ENCODE measurements at regions of chr7 and their contacts with region 1.

Region 1: GRCh38 chr7:2863461-2864066 is 19.5 kb upstream of the GNA12 start:
- DNase-seq: peak; percentile 91
- H3K4me3 Mint-ChIP-seq: peak overlapping the region; percentile 73
- H3K27ac Mint-ChIP-seq: peak overlapping the region; percentile 91
- H3K4me1 Mint-ChIP-seq: peaks cover 25% of the 10 kb centered on the region
- H3K27me3 Mint-ChIP-seq: no peaks in the 10 kb centered on the region

Region 2: GRCh38 chr7:2720582-2721491 is 142.7 kb before region 1 on chr7:
- CTCF ChIA-PET with region 1: interaction called, 6 read pairs
- POLR2A ChIA-PET with region 1: no interaction called
- intact Hi-C with region 1: loop called (anchors 5 kb)
- DNase-seq: peak; percentile 95
- H3K4me3 Mint-ChIP-seq: peak overlapping the region; percentile 16
- H3K27ac Mint-ChIP-seq: peak overlapping the region; percentile 56
- H3K4me1 Mint-ChIP-seq: peaks cover 47% of the 10 kb centered on the region
- H3K27me3 Mint-ChIP-seq: no peaks in the 10 kb centered on the region

Region 3: DNA sequence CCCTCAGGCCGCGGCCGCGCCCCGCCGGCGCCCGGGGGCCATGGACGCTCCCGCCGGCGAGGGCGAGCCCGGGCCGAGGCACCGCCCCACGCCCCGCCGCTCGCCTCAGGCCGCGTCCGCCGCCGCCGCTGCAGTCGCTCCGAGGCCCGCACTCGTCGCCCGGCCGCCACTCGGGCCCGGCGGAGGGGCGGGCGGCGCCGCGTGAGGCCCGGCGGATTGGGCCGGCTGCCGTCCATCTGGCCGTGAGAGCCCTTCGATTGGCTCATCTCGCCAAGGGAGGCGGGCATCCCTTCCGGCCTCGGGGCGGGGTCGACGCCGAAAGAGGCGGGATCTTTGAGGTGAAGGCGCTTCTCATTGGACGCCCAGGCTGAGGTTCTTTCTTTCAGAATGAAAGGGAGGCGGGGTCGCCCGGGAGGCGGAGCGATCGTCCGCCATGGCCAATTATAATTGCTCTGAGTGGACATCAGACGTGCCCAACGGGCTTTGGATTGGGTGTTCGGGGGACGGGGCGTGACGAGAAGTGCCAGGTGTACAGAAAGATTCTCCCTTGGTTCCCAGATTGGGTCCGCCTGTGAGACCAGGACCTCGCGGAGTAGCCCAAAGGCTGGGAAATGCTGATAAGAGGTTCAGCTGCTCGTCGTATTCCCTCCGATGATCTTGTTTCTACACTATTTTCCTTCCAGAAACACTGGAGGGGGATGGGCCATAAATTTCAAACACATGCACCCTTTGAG is 19.2 kb before region 1 on chr7 and contains the start of gene GNA12:
- CTCF ChIA-PET with region 1: interaction called, 9 read pairs
- POLR2A ChIA-PET with region 1: no interaction called
- intact Hi-C with region 1: loop called (anchors 2 kb)
- DNase-seq: peak; percentile 99
- H3K4me3 Mint-ChIP-seq: peak within 1 kb of the TSS; percentile 74
- H3K27ac Mint-ChIP-seq: peak within 1 kb of the TSS; percentile 42
- H3K4me1 Mint-ChIP-seq: peaks cover 42% of the 10 kb centered on the region
- H3K27me3 Mint-ChIP-seq: no peaks in the 10 kb centered on the region
- total RNA-seq, gene GNA12: 23.6 to 23.7 TPM

Region 4: DNA sequence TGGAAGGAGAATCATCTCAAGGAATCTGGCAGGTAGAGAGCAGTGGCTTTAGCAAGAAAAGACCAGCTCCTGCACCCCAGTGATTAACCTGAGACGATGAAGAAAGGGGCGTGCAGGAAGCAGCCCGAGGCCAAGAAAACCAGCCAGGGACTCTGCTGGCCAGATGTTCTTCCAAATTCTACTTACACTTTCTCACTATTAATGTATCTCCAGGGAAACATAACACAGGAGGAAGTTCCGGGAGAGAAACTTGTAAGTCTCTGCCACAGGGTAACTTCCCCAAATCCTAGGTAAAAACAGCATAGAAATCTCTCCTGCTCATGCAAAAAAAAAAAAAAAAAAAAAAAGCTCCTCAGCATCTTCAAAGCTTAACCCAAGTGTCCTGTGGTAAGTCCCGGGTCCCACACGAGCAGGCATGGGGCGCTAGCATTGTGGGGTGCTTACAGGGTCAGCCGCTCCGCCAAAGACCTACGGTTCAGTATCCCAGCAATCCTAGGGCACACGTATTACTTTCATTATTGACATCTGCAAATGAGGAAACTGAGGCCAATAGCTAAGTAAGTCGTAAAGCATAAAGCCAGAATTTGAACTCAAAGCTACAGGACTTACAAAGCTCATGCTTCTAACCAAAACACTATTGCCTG is 77.8 kb after region 1 on chr7:
- CTCF ChIA-PET with region 1: no interaction called
- POLR2A ChIA-PET with region 1: no interaction called
- intact Hi-C with region 1: no loop called
- DNase-seq: peak; percentile 3
- H3K4me3 Mint-ChIP-seq: no peak overlapping the region
- H3K27ac Mint-ChIP-seq: no peak overlapping the region
- H3K4me1 Mint-ChIP-seq: peaks cover 4% of the 10 kb centered on the region
- H3K27me3 Mint-ChIP-seq: no peaks in the 10 kb centered on the region

Region 5: GRCh38 chr7:3154912-3155494 is 291.4 kb after region 1 on chr7:
- CTCF ChIA-PET with region 1: interaction called, 34 read pairs
- POLR2A ChIA-PET with region 1: no interaction called
- intact Hi-C with region 1: loop called (anchors 2 kb)
- DNase-seq: peak; percentile 70
- H3K4me3 Mint-ChIP-seq: no peak overlapping the region
- H3K27ac Mint-ChIP-seq: peak overlapping the region; percentile 19
- H3K4me1 Mint-ChIP-seq: peaks cover 19% of the 10 kb centered on the region
- H3K27me3 Mint-ChIP-seq: peaks cover 2% of the 10 kb centered on the region

Region 6: GRCh38 chr7:3673524-3673923 is 810.0 kb after region 1 on chr7:
- CTCF ChIA-PET with region 1: interaction called, 30 read pairs
- POLR2A ChIA-PET with region 1: no interaction called
- intact Hi-C with region 1: loop called (anchors 10 kb)
- DNase-seq: peak; percentile 66
- H3K4me3 Mint-ChIP-seq: no peak overlapping the region
- H3K27ac Mint-ChIP-seq: no peak overlapping the region
- H3K4me1 Mint-ChIP-seq: no peaks in the 10 kb centered on the region
- H3K27me3 Mint-ChIP-seq: no peaks in the 10 kb centered on the region

Measured in activated CD4-positive, alpha-beta memory T cell treated with anti-CD3 and anti-CD28 coated beads for 36 hours (primary cell).